RWPE1 (cell line): ENCODE measurements at regions of chr5 and their contacts with region 1.

Region 1: GRCh38 chr5:92402045-92402444 is 1018.9 kb upstream of the ARRDC3 start:
- DNase-seq: no peak
- H3K27ac ChIP-seq: no peak overlapping the region
- CTCF ChIP-seq: no peak

Region 2: DNA sequence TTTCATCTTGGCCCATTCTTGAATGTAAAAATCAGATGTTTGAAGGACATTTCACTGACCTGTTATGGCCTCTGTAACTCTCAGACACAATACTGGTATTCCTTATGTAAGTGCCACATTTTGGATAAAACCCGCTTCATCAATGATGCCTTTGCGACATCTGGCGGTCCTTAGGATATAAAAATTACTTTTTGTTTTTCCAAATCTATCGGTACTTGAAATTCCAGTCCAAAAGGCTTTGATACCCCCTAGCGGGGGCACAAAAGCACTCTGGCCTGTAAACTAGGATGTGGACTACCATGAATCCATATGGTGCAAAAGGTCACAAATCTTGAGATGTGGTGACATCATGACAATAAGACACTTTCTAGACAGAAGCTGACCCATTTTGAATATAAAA is 1924.5 kb after region 1 on chr5:
- CTCF ChIA-PET with region 1: no interaction called
- POLR2A ChIA-PET with region 1: interaction called, 11 read pairs
- DNase-seq: no peak
- H3K27ac ChIP-seq: no peak overlapping the region
- CTCF ChIP-seq: no peak